IMR-90 (cell line): ENCODE measurements at regions of chr12 and their contacts with region 1.

Region 1: DNA sequence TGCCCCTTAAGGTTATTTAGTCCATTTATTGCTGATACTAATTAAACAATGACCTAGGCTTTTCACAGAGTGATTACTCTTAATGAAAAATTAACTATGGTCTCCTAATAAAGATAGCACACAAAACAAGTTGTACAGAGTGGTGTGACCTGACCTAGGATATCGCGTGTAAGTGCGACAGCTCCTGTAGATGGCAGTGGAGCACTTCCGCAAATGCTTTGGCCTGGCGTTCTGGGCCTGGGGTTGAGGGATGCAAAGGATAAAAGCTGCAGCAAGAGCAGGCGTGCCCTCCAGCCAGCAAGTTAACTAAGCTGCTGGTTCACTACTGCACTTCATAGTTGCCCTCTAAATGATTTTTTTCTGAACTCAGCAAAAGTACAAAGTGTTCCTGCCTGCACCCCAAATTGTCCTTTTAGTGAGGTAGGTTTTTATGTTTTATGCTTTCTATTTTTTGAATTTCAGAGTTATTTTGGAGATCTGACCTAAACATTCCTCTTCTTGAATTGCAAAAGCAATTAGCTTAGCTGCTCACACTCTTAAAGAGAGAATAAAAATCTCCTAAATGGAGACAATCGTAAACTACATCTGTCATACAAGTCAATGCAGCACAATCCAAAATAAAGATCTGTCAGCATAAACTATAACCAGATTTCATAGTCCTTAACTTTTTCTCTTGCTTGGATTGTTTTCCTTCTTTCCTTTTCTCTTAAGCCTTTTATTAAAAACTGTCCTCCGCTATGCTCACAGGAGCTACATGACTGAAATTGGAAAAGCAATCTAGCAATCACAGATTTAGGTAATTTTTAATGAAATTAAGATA is 379.6 kb downstream of the LRIG3 start:
- DNase-seq: peak; percentile 91
- ATAC-seq: peak; percentile 92
- H3K4me3 ChIP-seq: no peak overlapping the region
- H3K27ac ChIP-seq: peak overlapping the region; percentile 16; the same call in 1 of the 2 replicates
- H3K4me1 ChIP-seq: peaks cover 7% of the 10 kb centered on the region
- H3K27me3 ChIP-seq: no peaks in the 10 kb centered on the region
- CTCF ChIP-seq: peak; percentile 93
- POLR2A ChIP-seq: no peak
- RAD21 ChIP-seq: peak; percentile 98

Region 2: DNA sequence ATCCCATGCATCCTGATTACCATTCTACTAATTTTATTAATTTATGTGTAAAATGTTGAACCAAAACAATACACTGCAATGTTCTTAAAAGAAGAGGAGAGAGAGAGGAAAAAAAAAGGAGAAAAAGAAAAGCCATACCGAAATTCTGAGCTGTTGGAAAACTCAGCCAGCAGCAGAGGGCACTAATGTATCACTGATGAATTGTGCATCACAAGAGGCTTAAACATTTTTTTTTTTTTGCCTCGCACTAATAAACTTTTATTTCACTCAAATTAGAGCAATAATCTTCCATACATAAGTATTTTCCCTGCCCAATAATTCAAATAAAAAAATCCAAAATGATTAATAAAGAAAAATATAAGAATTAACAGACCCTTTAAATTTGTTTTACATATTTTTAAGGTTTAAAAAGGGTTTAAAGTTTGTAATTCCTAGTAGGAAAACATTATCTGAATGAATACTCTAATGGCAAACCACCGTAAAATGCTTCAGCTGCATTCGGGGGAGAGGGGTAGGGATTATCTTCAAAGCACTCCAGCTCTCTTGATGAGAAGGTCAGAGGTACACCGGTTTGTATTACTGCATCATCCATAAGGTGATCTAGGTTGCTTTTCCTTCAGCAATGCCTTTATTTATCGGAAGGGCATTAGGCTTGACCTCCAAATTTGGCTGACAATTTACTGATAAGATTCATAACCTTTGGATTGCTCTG is 557.4 kb before region 1 on chr12:
- CTCF ChIA-PET with region 1: no interaction called
- POLR2A ChIA-PET with region 1: no interaction called
- dilution Hi-C with region 1: no loop called
- in situ Hi-C with region 1: no loop called
- intact Hi-C with region 1: loop called (anchors 2 kb)
- DNase-seq: peak; percentile 67
- ATAC-seq: peak; percentile 63
- H3K4me3 ChIP-seq: no peak overlapping the region
- H3K27ac ChIP-seq: no peak overlapping the region
- H3K4me1 ChIP-seq: peaks cover 2% of the 10 kb centered on the region; the same call in 1 of the 2 replicates
- H3K27me3 ChIP-seq: no peaks in the 10 kb centered on the region; the same call in 1 of the 2 replicates
- CTCF ChIP-seq: peak; percentile 83
- POLR2A ChIP-seq: no peak
- RAD21 ChIP-seq: peak; percentile 81

Region 3: GRCh38 chr12:58202933-58203718 is 337.6 kb before region 1 on chr12:
- CTCF ChIA-PET with region 1: no interaction called
- POLR2A ChIA-PET with region 1: no interaction called
- dilution Hi-C with region 1: no loop called
- in situ Hi-C with region 1: no loop called
- intact Hi-C with region 1: no loop called
- DNase-seq: no peak
- ATAC-seq: no peak
- H3K4me3 ChIP-seq: no peak overlapping the region
- H3K27ac ChIP-seq: no peak overlapping the region
- H3K4me1 ChIP-seq: no peaks in the 10 kb centered on the region
- H3K27me3 ChIP-seq: peaks cover 4% of the 10 kb centered on the region
- CTCF ChIP-seq: no peak
- POLR2A ChIP-seq: no peak
- RAD21 ChIP-seq: no peak

Region 4: DNA sequence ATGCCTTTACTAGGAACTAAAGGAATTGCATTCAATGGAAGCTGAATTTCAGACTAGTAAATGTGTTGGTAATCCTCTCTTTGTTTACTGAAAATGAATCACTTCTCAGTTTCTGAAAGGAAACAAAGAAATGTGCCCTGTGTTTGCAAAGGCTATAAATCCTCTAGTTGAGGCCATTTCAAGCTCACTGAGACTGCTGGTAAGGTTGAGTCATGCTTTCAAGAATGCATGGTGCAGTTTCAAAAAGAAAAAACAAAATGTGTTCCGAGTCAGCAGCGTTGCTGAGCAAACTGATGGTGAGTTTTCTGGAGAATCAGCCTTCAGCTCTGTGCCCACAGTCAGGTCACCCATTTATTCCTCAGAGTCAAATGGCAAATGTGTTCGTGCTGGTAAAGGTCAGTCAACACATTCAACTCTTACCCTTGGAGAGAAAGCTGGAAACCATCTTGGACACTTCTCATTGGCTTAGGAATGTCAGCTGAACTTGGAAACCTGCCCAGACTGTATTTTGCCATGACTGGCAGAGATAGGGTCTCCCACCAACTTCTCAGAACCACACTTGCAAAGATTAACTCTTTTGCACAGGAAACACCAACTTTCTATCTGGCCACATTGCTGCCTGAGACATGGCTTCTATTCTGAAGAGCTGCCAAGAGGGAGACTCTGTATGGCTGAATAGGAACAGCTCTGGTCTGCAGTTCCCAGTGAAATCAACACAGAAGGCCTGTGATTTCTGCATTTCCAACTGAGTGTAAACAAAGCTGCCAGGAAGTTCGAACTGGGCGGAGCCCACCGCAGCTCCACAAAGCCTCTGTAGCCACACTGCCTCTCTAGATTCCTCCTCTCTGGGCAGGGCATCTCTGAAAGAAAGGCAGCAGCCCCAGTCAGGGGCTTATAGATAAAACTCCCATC is 115.0 kb before region 1 on chr12:
- CTCF ChIA-PET with region 1: interaction called, 10 read pairs
- POLR2A ChIA-PET with region 1: interaction called, 3 read pairs
- dilution Hi-C with region 1: no loop called
- in situ Hi-C with region 1: no loop called
- intact Hi-C with region 1: no loop called
- DNase-seq: peak; percentile 94
- ATAC-seq: peak; percentile 90
- H3K4me3 ChIP-seq: peak overlapping the region; percentile 8; the same call in 1 of the 2 replicates
- H3K27ac ChIP-seq: peak overlapping the region; percentile 79
- H3K4me1 ChIP-seq: peaks cover 12% of the 10 kb centered on the region
- H3K27me3 ChIP-seq: no peaks in the 10 kb centered on the region
- CTCF ChIP-seq: no peak
- POLR2A ChIP-seq: no peak
- RAD21 ChIP-seq: 0 out of 2 replicates have a peak, but pooled peaks have one; percentile 15

Region 5: DNA sequence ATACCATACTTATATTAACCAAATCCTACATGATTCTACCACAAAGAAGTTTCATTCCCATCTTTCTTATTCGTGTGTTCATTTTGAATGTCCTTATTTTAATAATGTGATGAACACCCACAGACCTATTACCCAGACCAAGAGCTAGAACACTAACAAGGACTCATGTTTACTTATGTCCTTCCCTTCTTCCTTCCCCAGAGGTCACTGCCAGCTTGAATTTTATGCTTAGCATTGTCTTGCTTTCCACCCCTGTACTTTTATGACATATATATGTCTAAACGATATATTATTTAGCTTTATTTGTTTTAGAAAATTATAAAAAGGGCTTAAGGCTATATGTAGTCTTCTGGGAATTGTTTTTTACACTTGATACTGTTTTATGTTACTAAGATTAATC is 141.0 kb after region 1 on chr12:
- CTCF ChIA-PET with region 1: no interaction called
- POLR2A ChIA-PET with region 1: no interaction called
- dilution Hi-C with region 1: no loop called
- in situ Hi-C with region 1: no loop called
- intact Hi-C with region 1: no loop called
- DNase-seq: no peak
- ATAC-seq: no peak
- H3K4me3 ChIP-seq: no peak overlapping the region
- H3K27ac ChIP-seq: no peak overlapping the region
- H3K4me1 ChIP-seq: no peaks in the 10 kb centered on the region
- H3K27me3 ChIP-seq: no peaks in the 10 kb centered on the region
- CTCF ChIP-seq: no peak
- POLR2A ChIP-seq: no peak
- RAD21 ChIP-seq: no peak

Region 6: GRCh38 chr12:58888131-58888783 is 347.6 kb after region 1 on chr12:
- CTCF ChIA-PET with region 1: interaction called, 3 read pairs
- POLR2A ChIA-PET with region 1: no interaction called
- dilution Hi-C with region 1: no loop called
- in situ Hi-C with region 1: loop called (anchors 10 kb)
- intact Hi-C with region 1: no loop called
- DNase-seq: peak; percentile 63
- ATAC-seq: peak; percentile 48
- H3K4me3 ChIP-seq: no peak overlapping the region
- H3K27ac ChIP-seq: no peak overlapping the region
- H3K4me1 ChIP-seq: peaks cover 2% of the 10 kb centered on the region; the same call in 1 of the 2 replicates
- H3K27me3 ChIP-seq: no peaks in the 10 kb centered on the region
- CTCF ChIP-seq: no peak
- POLR2A ChIP-seq: no peak
- RAD21 ChIP-seq: no peak

Region 7: DNA sequence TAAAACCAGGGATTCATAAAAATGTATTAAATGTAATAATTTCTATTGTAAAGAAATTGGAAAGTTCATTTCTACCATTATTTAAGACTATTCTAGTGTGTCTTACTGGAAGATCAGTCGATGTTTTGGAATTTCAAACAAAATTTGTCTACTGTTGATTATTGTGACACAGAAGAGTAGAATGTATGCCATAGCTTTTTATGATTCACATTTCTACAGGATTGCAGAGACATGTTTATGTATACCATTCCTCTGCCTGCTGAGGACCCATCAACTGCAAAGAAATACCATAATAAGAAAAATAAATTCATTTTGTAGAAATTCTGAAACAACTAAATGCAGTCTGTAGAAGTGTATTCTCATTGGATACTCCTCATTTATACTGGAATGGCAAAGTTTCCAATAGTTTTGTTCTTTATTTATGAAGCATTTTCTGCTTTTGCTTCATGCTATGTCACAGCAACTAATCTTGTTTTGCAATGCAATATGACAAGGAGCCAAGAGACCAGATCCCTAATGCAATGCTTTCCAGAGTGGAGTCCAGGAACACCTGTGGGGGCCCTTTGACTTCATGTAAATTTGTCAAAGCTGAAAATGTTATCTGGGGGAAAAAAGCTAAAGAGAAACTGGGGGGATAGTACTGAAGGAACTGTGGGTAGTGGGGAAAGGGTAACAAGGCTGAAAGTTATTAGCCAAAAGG is 552.5 kb after region 1 on chr12:
- CTCF ChIA-PET with region 1: interaction called, 9 read pairs
- POLR2A ChIA-PET with region 1: no interaction called
- dilution Hi-C with region 1: no loop called
- in situ Hi-C with region 1: loop called (anchors 5 kb)
- intact Hi-C with region 1: no loop called
- DNase-seq: peak; percentile 80
- ATAC-seq: peak; percentile 86
- H3K4me3 ChIP-seq: no peak overlapping the region
- H3K27ac ChIP-seq: peak overlapping the region; percentile 41; the same call in 1 of the 2 replicates
- H3K4me1 ChIP-seq: peaks cover 6% of the 10 kb centered on the region
- H3K27me3 ChIP-seq: no peaks in the 10 kb centered on the region
- CTCF ChIP-seq: no peak
- POLR2A ChIP-seq: no peak
- RAD21 ChIP-seq: no peak

Region 8: GRCh38 chr12:59164991-59165718 is 624.5 kb after region 1 on chr12:
- CTCF ChIA-PET with region 1: interaction called, 10 read pairs
- POLR2A ChIA-PET with region 1: no interaction called
- dilution Hi-C with region 1: no loop called
- in situ Hi-C with region 1: no loop called
- intact Hi-C with region 1: loop called (anchors 2 kb)
- DNase-seq: peak; percentile 64
- ATAC-seq: peak; percentile 72; the same call in 1 of the 2 replicates
- H3K4me3 ChIP-seq: no peak overlapping the region
- H3K27ac ChIP-seq: no peak overlapping the region
- H3K4me1 ChIP-seq: peaks cover 2% of the 10 kb centered on the region; the same call in 1 of the 2 replicates
- H3K27me3 ChIP-seq: no peaks in the 10 kb centered on the region
- CTCF ChIP-seq: peak; percentile 61
- POLR2A ChIP-seq: no peak
- RAD21 ChIP-seq: peak; percentile 49